GM10248 (cell line): ENCODE measurements at regions of chr9 and their contacts with region 1.

Region 1: DNA sequence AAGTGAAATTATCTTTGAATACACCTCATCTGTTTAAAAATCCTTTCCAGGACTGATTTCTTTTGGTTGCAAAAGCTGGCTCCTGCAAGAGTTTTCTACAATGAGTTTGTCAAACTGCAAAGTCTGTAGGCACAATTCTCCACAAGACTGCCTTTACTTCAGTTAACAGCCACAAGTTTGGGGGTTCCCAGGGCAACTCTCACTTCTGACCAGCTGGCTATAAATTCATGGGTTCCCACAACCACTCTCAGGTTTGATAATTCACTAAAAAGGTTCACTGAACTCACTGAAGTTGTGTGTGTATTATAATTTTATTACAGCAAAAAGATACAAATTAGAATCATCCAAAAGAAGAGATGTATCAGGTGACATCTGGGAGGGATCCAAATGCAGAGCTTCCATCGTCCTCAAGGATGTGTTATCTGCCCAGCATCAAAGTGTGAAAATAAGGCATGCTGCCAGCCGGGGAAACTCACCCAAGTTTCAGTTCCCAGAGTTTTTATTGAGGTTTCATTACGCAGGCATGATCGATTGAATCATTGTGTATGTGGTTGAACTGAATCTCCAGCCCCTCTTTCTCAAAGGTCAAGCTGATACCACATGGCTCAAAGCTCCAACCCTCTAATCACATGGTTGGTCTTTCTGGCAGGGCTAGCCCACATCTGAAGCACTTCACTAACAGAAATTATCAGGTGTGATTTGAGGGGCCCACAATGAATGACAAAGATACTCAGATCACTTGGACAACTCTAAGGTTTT is 19.0 kb upstream of the PSIP1 start:
- DNase-seq: peak; percentile 73
- CTCF ChIP-seq: no peak

Region 2: GRCh38 chr9:15510789-15511575 is 18.8 kb before region 1 on chr9 and contains the start of gene PSIP1:
- CTCF ChIA-PET with region 1: interaction called, 41 read pairs
- POLR2A ChIA-PET with region 1: interaction called, 7 read pairs
- DNase-seq: peak; percentile 85
- CTCF ChIP-seq: no peak

Region 3: GRCh38 chr9:15543047-15543813 is 13.5 kb after region 1 on chr9:
- CTCF ChIA-PET with region 1: interaction called, 27 read pairs
- POLR2A ChIA-PET with region 1: no interaction called
- DNase-seq: no peak
- CTCF ChIP-seq: no peak

Region 4: DNA sequence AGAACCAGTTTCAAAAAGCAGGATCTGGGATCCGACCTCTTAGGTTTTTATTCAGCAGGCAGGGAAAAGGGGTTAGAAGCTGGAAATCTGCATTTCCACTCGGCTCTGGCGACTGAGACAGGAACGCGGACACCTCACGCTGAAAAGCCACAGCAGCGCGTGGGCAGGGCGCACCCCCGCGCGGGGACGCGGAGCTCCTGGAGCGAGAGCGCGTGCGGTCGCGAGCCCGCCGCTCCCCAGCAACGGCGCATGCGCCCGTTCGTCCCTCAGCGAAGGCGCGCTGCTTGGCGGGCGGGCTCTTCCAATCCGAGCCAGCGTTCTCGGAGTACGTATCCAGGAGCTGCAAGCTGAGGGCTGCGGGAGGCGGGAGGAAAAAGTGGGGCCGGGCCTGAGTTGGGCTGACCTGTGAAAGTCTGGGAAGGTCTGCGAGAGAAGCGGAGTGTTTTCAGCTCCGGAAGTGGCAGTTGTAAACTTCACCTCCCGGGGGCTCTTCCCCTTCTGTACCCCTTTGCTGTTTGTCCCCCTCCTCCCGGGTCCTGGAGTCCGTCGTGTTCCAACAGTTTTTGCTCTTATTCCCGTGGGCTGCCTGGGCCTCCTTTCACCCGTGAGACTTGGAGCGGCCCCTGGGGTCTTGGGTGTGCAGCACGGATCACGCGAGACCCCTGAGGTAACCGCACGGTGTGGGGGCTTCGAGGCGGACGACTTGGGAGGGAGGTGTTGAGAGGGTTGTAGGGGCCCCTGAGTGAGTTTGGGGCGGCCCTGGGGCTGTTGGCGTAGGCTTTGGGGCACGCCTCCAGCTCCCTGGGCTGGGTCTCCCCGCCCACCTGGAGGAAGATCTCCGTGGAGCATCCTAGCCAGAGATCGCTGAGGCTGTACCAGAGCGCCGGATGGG is 23.1 kb after region 1 on chr9 and contains the start of gene CCDC171:
- CTCF ChIA-PET with region 1: interaction called, 15 read pairs
- POLR2A ChIA-PET with region 1: no interaction called
- DNase-seq: peak; percentile 97
- CTCF ChIP-seq: no peak